AG04449 (cell line): ENCODE measurements at regions of chr4 and their contacts with region 1.

Region 1: DNA sequence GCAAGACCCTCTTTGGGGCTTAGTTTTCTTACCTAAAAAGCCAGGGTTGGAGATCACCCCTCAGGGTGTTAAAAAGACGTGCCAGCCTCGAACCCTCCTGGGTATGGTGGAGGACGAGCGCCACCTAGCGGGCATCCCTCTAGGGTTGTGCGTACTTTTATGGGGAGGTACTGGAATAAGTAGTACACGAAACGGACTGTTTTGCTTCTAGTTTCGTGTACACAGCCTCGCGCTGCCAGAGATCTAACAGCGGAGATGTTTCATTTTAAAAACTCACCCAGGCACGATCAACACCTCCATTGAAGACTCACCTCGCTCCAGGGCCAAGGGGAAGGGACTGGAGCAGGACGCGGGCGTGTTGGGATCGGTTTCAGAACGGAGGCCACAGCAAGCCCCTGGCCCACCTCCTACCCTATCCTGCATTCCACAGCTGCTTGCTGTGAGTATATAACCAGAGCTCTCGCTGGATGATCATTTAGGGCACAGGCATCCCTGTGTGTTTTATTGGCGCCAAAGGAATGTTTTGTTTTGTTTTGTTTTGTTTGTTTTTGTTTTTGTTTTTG is 4.8 kb upstream of the NKX3-2 start:
- DNase-seq: peak; percentile 9
- H3K4me3 ChIP-seq: peak overlapping the region; percentile 59
- CTCF ChIP-seq: peak; percentile 79

Region 2: GRCh38 chr4:12439633-12440305 is 1109.3 kb before region 1 on chr4:
- CTCF ChIA-PET with region 1: no interaction called
- POLR2A ChIA-PET with region 1: no interaction called
- DNase-seq: no peak
- H3K4me3 ChIP-seq: no peak overlapping the region
- CTCF ChIP-seq: no peak

Region 3: DNA sequence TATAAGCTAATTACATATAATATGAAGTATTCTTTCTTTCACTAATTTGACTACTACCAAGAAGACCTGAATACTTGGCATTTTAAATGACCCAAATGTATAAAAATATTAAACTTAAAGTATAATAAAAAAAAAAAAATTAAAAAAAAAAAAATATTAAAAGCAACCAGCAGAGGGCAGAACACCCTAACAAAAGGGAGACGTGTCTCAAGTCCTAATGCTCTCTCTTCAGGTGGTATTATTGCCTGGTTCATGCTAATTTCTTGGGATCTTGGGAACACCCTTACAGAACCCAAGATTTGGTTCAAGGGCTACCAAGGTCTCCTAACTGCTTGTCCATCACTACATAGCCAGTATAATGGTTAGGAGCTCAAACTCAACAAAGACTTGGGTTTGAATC is 819.7 kb before region 1 on chr4:
- CTCF ChIA-PET with region 1: interaction called, 17 read pairs
- POLR2A ChIA-PET with region 1: no interaction called
- DNase-seq: no peak
- H3K4me3 ChIP-seq: no peak overlapping the region
- CTCF ChIP-seq: peak; percentile 24

Region 4: DNA sequence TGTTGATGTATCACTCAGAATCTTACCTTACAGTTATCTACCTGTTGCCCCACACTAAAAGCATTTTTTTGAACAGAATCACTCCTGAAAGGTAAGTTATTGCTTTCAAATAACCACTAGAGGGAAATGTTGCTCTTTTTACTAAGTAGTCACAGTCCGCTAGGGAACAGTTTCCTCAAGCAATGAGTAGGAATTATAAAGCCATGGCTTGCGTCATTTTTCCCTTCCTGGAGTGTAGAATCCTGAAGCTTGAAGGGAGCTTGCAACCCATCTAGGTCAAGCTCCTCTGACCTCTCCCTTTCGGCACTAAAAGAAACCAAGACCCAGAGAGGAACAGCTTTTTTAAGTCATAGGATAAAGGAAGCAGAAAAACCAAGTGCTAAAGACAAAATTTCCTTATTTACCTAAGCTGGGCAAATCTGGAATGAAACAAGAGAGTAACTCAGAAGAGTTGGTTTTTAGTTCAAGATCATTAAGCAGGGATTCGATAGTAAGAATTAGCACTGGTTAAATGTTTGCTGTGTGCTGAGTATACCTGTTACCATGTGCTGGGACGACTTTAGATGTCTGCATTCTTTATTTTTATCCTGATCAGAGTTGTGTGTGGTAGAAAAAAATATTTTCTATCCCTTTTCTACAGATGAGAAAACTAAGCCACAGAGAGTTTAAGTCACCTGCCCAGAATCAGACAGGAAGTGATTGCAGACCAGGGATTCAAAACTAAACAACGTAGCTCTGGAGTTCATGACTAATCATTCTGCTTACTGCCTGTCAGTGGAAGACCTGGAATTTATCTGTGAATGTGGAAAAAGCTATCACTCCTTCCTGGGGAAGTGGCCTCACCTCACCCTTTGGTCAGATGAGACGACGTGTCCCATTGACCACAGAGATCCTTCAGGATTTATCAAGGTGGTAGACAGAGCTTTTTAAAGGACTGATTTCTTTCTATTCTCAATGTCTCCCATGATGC is 696.4 kb before region 1 on chr4:
- CTCF ChIA-PET with region 1: interaction called, 68 read pairs
- POLR2A ChIA-PET with region 1: no interaction called
- DNase-seq: no peak
- H3K4me3 ChIP-seq: no peak overlapping the region
- CTCF ChIP-seq: peak; percentile 11

Region 5: GRCh38 chr4:13403833-13404232 is 145.2 kb before region 1 on chr4:
- CTCF ChIA-PET with region 1: no interaction called
- POLR2A ChIA-PET with region 1: no interaction called
- DNase-seq: no peak
- H3K4me3 ChIP-seq: no peak overlapping the region
- CTCF ChIP-seq: no peak

Region 6: GRCh38 chr4:13498469-13498868 is 50.6 kb before region 1 on chr4:
- CTCF ChIA-PET with region 1: no interaction called
- POLR2A ChIA-PET with region 1: no interaction called
- DNase-seq: no peak
- H3K4me3 ChIP-seq: no peak overlapping the region
- CTCF ChIP-seq: no peak

Region 7: DNA sequence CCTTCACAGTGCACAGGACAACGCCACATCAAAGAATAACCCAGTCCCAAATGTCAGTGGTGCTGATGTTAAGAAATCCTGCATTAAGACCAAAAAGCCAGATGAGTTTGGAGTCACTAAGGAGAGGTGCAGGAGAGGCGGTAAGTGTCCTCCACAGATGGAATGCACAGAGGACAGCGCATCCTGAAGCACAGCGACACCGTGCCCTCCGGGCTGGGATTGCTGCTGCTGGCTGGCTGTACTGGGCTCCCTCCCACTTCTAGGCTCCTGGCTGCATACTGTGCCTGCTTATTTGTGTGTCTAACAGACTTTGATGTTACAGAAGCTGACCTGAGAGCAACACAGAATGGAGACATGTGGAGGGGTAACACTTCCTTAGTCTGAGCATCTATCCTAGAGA is 404.0 kb after region 1 on chr4:
- CTCF ChIA-PET with region 1: no interaction called
- POLR2A ChIA-PET with region 1: no interaction called
- DNase-seq: no peak
- H3K4me3 ChIP-seq: no peak overlapping the region
- CTCF ChIP-seq: no peak